Right cardiac atrium (tissue), 5 donors: ENCODE measurements at regions of chr2 and their contacts with region 1.

Region 1: GRCh38 chr2:64767670-64768468 is 114.2 kb upstream of the SERTAD2 start:
- DNase-seq: peak; percentile 88 to 96 (median 95)
- ATAC-seq: peak; percentile 96
- H3K4me3 ChIP-seq: peak overlapping the region; percentile 52
- H3K27ac ChIP-seq: peak overlapping the region; percentile 96
- H3K4me1 ChIP-seq: no peaks in the 10 kb centered on the region
- H3K27me3 ChIP-seq: no peaks in the 10 kb centered on the region

Region 2: GRCh38 chr2:64653349-64654062 is 114.4 kb before region 1 on chr2 and contains the start of gene SERTAD2:
- intact Hi-C with region 1: loop called in 1 of 4 experiments (anchors 5 kb)
- DNase-seq: peak; percentile 92 to 97 (median 97)
- ATAC-seq: peak; percentile 94
- H3K4me3 ChIP-seq: peak within 1 kb of the TSS; percentile 96
- H3K27ac ChIP-seq: peak within 1 kb of the TSS; percentile 99
- H3K4me1 ChIP-seq: no peaks in the 10 kb centered on the region
- H3K27me3 ChIP-seq: no peaks in the 10 kb centered on the region
- total RNA-seq, gene SERTAD2: 17.9 to 25.4 (median 20.0) TPM

Region 3: DNA sequence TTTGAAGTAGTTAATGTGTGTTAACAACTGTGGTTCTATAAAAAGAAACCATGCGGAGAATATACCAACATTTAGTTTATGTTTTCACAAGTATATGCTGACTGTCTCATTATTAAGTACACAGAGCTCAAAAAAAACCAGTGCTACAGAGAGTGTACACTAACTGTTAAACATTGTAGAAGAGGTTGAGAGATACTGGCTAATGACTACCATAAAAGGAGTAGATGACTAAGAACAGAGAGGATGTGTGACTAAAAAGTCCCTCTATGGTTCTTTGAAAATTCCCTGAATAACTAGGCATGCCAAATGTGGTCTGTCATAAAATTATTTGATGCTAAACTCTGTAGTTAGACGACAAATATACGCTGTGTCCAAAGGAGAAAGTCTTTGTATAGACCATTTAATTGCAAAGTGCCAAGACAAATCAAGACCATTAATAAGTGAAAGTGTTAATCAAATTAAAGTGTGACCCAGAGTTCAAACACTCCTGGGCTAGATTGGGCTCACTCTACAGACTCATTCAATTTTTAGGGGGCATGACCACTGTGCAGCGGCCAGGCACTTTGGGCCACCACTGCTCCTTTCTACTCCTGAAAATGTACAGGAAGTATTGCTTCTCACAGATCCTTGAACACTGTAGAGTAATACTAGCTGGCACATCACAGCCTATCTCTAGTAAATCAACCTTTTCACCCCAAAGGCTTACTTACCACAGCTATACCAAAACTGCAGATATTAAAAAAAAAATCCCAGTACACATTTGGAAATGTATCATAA is 69.0 kb before region 1 on chr2:
- intact Hi-C with region 1: no loop called
- DNase-seq: no peak
- ATAC-seq: no peak
- H3K4me3 ChIP-seq: no peak overlapping the region
- H3K27ac ChIP-seq: no peak overlapping the region
- H3K4me1 ChIP-seq: peaks cover 4% of the 10 kb centered on the region
- H3K27me3 ChIP-seq: no peaks in the 10 kb centered on the region

Region 4: GRCh38 chr2:64846179-64846578 is 78.3 kb after region 1 on chr2:
- intact Hi-C with region 1: no loop called
- DNase-seq: no peak
- ATAC-seq: peak in 1 of 2 donors; percentile 51
- H3K4me3 ChIP-seq: no peak overlapping the region
- H3K27ac ChIP-seq: no peak overlapping the region
- H3K4me1 ChIP-seq: no peaks in the 10 kb centered on the region
- H3K27me3 ChIP-seq: no peaks in the 10 kb centered on the region

Region 5: GRCh38 chr2:64859312-64860212 is 91.7 kb after region 1 on chr2:
- intact Hi-C with region 1: loop called in 3 of 4 experiments (anchors 5 to 10 kb)
- DNase-seq: peak; percentile 92 to 96 (median 96)
- ATAC-seq: peak; percentile 90 to 91
- H3K4me3 ChIP-seq: peak overlapping the region; percentile 45
- H3K27ac ChIP-seq: peak overlapping the region; percentile 87
- H3K4me1 ChIP-seq: peaks cover 15% of the 10 kb centered on the region
- H3K27me3 ChIP-seq: no peaks in the 10 kb centered on the region

Region 6: GRCh38 chr2:64888591-64889309 is 120.9 kb after region 1 on chr2:
- intact Hi-C with region 1: no loop called
- DNase-seq: no peak
- ATAC-seq: peak in 1 of 2 donors; percentile 37
- H3K4me3 ChIP-seq: no peak overlapping the region
- H3K27ac ChIP-seq: no peak overlapping the region
- H3K4me1 ChIP-seq: no peaks in the 10 kb centered on the region
- H3K27me3 ChIP-seq: no peaks in the 10 kb centered on the region

Region 7: GRCh38 chr2:65396348-65397026 is 628.6 kb after region 1 on chr2:
- intact Hi-C with region 1: no loop called
- DNase-seq: peak in 2 of 3 donors; percentile 52 to 60
- ATAC-seq: peak; percentile 81 to 89
- H3K4me3 ChIP-seq: no peak overlapping the region
- H3K27ac ChIP-seq: peak overlapping the region; percentile 38
- H3K4me1 ChIP-seq: peaks cover 12% of the 10 kb centered on the region
- H3K27me3 ChIP-seq: no peaks in the 10 kb centered on the region